Posterior cingulate gyrus (tissue), 11 donors: ENCODE measurements at regions of chr2 and their contacts with region 1.

Region 1: GRCh38 chr2:120735746-120736170 is at the start of gene GLI2:
- DNase-seq: peak; percentile 51 to 95 (median 70)

Region 2: DNA sequence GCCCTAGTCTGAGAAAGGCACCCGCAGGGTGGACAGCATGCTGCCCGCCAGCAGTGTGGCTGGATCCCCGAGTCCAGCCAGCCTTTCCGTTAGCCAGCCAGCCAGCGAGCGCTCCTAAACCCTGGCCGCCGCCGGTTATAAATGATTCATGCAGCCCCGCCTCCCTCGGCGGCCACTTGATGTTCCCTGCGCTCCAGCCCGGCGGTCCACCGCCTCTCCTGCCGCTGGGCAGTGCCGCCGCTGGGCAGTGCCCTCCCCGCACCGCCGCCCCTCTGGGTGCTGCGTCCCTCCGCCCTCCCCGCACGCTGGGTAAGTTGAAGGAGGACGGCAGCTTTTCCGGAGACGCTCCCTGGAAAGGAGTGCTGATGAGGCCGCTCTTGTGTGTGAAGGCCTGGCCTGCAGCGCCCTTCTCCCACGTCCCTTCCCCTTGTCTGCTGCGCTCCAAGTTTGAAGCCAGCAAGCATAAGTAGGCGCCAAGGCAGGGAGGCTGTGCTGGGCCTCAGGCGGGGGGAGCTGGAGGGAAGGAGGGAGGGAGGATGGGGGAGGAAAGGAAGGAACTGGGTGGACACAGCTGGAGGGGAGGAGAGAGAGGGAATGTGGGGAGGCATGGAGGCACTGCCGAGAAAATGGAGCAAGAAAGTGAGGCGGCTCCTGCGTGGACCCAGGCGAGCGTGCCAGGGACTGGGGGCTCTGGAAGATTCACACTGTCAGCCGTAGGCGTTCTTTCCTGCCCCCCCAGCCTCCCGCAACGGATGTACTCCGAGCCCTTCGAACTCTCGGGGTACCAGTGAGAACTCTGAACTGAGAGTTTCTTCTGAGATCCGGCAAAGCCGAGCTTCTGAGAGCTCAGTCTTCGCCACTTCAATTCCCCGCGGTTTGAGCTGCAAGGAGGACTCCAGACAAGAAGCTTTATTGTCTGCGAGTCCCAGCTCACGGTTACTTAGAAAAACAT is 131.8 kb after region 1 on chr2:
- intact Hi-C with region 1: loop called (anchors 5 kb)
- DNase-seq: peak; percentile 31 to 94 (median 68)

Region 3: DNA sequence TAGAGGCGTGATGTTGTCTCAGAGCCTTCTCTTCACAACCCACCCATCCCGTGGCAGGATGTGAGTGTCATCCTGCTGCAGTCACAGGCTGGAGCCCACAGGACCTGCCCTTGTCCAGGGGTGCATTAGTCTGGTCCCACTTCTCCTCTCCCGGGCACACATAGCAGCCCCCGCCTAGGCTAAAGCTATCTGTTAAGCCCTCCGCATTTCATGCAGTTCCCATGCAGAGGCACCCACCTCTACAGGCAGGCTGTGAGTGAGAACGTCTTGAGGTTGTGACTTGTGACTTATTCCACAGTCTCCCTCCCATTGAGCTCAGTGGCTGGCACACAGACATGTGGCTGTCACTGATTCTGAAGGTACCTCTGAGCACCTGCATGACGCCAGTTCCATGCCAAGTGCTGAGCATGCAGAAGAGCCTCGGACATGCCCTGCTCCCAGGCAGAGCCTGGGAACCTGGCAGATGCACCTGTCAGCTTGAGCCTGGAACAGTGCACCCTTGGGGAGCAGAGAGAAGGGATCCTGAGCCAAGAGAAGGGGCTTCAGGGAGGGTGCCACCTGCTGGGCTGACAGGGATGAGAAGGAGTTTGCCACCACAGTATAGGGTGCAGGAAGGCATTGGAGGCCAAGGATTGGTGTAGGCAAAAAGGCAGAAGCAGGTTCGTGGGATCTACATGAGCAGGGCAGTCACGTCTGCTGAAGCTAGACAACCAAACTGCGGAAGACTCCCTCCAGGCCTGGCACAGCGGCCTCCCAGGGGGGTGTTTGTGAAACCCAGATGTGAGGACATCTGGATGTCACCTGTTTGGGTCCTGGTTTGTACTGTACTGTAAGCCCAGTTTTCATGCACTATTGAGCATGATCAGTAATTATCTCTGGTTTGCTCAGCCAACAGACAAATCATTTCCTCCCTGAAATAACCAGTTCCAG is 213.5 kb after region 1 on chr2:
- intact Hi-C with region 1: loop called (anchors 10 kb)
- DNase-seq: no peak

Region 4: DNA sequence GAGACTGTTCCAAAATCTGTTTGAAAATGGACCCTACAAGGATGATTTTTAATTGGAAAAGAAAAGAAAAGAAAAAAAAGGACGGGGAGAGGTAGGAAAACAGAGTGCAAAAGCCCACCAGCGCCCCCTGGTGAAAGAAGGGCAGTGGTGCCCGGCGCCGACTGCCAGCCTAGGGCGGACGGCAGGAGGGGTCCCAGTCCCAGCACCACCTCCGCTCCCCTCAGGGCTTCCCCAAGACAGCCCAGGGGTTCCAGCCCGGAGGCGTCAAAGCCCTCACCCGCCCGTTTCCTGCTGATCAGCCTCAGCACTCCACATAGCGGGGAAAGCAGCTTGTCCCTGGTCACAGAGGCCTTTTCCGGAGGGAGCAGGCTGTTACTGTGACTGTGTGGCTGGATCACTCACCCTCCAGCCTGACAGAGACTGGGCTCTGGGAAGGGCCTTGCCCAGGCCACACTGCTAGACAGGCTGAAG is 335.3 kb after region 1 on chr2:
- intact Hi-C with region 1: loop called (anchors 1 kb)
- DNase-seq: peak; percentile 47 to 93 (median 74)